ENCODE measurements at regions of chr18 and their contacts with region 1.

Region 1: DNA sequence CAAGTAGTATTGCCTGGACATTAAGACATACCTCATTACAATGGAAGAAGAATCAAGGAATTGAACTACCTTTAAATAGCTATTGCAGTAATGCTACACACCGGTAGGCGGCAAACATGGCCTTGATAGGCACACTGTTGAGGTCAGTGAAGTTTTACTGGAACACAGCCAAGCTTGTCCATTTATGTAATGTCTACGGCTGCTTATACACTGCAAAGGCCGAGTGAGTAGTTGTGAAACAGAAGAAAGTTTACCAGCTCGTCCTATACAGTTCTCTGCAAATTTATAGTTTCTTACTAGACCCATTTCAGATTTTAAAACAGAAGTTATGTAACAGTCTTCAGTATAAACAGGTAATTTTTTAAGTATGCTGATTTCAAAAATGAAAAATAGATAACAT is 38.8 kb downstream of the PPP4R1 start:
- DNase-seq: peak; percentile 94
- H3K4me3 ChIP-seq: no peak overlapping the region
- H3K27ac ChIP-seq: no peak overlapping the region
- H3K4me1 ChIP-seq: peaks cover 28% of the 10 kb centered on the region
- H3K27me3 ChIP-seq: no peaks in the 10 kb centered on the region
- CTCF ChIP-seq: peak; percentile 80 to 84
- POLR2A ChIP-seq: no peak

Region 2: GRCh38 chr18:9173770-9174233 is 401.8 kb before region 1 on chr18:
- CTCF ChIA-PET with region 1: no interaction called
- POLR2A ChIA-PET with region 1: no interaction called
- dilution Hi-C with region 1: no loop called
- intact Hi-C with region 1: no loop called
- DNase-seq: no peak
- H3K4me3 ChIP-seq: no peak overlapping the region
- H3K27ac ChIP-seq: no peak overlapping the region
- H3K4me1 ChIP-seq: peaks cover 5% of the 10 kb centered on the region
- H3K27me3 ChIP-seq: no peaks in the 10 kb centered on the region
- CTCF ChIP-seq: no peak
- POLR2A ChIP-seq: no peak

Region 3: GRCh38 chr18:9337873-9338272 is 237.7 kb before region 1 on chr18:
- CTCF ChIA-PET with region 1: no interaction called
- POLR2A ChIA-PET with region 1: no interaction called
- dilution Hi-C with region 1: no loop called
- intact Hi-C with region 1: no loop called
- DNase-seq: peak; percentile 31
- H3K4me3 ChIP-seq: no peak overlapping the region
- H3K27ac ChIP-seq: no peak overlapping the region
- H3K4me1 ChIP-seq: peaks cover 3% of the 10 kb centered on the region
- H3K27me3 ChIP-seq: no peaks in the 10 kb centered on the region
- CTCF ChIP-seq: no peak
- POLR2A ChIP-seq: no peak

Region 4: DNA sequence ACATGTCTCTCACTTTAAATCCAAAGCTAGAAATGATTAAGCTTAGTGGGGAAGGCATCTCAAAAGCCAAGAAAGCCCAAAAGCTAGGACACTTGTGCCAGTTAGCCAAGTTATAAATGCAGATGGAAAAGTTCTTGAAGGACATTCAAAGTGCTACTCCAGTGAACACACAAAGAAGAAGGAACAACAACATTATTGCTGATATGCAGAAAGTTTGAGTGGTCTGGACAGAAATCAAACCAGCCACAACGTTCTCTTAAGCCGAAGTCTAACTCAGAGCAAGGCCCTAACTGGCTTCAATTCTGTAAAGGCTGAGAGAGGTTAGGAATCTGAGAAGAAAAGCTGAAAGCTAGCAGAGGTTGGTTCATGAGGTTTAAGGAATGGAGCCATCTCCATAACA is 10.2 kb before region 1 on chr18:
- CTCF ChIA-PET with region 1: interaction called, 13 read pairs
- POLR2A ChIA-PET with region 1: interaction called, 4 read pairs
- dilution Hi-C with region 1: no loop called
- intact Hi-C with region 1: no loop called
- DNase-seq: no peak
- H3K4me3 ChIP-seq: no peak overlapping the region
- H3K27ac ChIP-seq: no peak overlapping the region
- H3K4me1 ChIP-seq: no peaks in the 10 kb centered on the region
- H3K27me3 ChIP-seq: no peaks in the 10 kb centered on the region
- CTCF ChIP-seq: no peak
- POLR2A ChIP-seq: no peak

Region 5: GRCh38 chr18:9661564-9661963 is 86.0 kb after region 1 on chr18:
- CTCF ChIA-PET with region 1: interaction called, 30 read pairs
- POLR2A ChIA-PET with region 1: no interaction called
- dilution Hi-C with region 1: no loop called
- intact Hi-C with region 1: loop called (anchors 1 kb)
- DNase-seq: no peak
- H3K4me3 ChIP-seq: no peak overlapping the region
- H3K27ac ChIP-seq: no peak overlapping the region
- H3K4me1 ChIP-seq: no peaks in the 10 kb centered on the region
- H3K27me3 ChIP-seq: no peaks in the 10 kb centered on the region
- CTCF ChIP-seq: peak in 1 of 2 donors; percentile 9
- POLR2A ChIP-seq: no peak

Region 6: GRCh38 chr18:9683407-9684396 is 108.1 kb after region 1 on chr18:
- CTCF ChIA-PET with region 1: interaction called, 24 read pairs
- POLR2A ChIA-PET with region 1: no interaction called
- dilution Hi-C with region 1: no loop called
- intact Hi-C with region 1: no loop called
- DNase-seq: peak; percentile 68
- H3K4me3 ChIP-seq: no peak overlapping the region
- H3K27ac ChIP-seq: no peak overlapping the region
- H3K4me1 ChIP-seq: no peaks in the 10 kb centered on the region
- H3K27me3 ChIP-seq: no peaks in the 10 kb centered on the region
- CTCF ChIP-seq: peak; percentile 30 to 44
- POLR2A ChIP-seq: no peak

Region 7: GRCh38 chr18:9913526-9914333 is 338.2 kb after region 1 on chr18 and contains the start of gene VAPA:
- CTCF ChIA-PET with region 1: interaction called, 5 read pairs
- POLR2A ChIA-PET with region 1: no interaction called
- dilution Hi-C with region 1: no loop called
- intact Hi-C with region 1: loop called (anchors 2 kb)
- DNase-seq: peak; percentile 99
- H3K4me3 ChIP-seq: peak within 1 kb of the TSS; percentile 78 to 99 (median 89)
- H3K27ac ChIP-seq: peak within 1 kb of the TSS; percentile 94
- H3K4me1 ChIP-seq: peaks cover 38% of the 10 kb centered on the region
- H3K27me3 ChIP-seq: peaks cover 0 to 1% of the 10 kb centered on the region in 2 experiments
- CTCF ChIP-seq: no peak
- POLR2A ChIP-seq: peak; percentile 77
- total RNA-seq, gene VAPA: 163 TPM in 2 replicates

Region 8: DNA sequence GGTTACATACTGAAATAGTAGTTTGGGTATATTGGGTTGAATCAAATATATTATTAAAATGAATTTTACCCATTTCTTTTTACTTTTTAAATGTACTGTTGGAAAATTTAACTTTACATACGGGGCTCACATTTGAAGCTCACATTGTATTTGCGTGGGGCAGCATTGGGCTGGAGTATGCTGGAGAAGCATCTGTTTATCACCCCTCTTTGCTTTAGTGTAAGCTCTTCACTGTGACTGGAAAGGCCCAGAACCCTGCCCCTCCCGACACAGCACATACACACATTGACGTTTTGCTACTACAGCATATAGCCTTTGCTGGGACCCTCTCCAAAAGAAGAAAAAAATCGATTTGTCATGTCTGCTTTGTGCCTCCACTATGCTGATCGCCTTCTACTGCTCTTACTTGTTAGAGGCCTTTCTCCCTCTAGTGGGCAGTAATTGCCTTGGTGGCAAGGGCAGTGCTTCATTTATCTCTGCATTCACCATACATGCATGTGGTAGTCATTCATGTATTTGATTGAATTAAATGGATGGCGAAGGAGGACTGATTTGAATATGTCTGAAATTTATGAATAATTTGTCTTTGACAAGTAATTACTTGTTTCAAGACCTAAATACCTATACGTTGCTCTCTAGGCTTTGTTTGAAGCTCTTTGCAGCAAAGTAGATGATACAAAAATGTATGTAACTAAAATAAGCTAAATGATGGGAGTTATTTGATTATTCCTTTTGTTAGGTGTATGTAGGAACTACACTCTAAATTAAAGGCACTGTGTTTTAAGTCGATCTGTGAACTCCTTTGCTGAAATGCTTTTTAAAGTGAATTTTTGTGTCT is 375.7 kb after region 1 on chr18:
- CTCF ChIA-PET with region 1: interaction called, 27 read pairs
- POLR2A ChIA-PET with region 1: interaction called, 3 read pairs
- dilution Hi-C with region 1: no loop called
- intact Hi-C with region 1: loop called (anchors 1 kb)
- DNase-seq: peak; percentile 75
- H3K4me3 ChIP-seq: no peak overlapping the region
- H3K27ac ChIP-seq: no peak overlapping the region
- H3K4me1 ChIP-seq: no peaks in the 10 kb centered on the region
- H3K27me3 ChIP-seq: no peaks in the 10 kb centered on the region
- CTCF ChIP-seq: peak; percentile 63 to 68
- POLR2A ChIP-seq: no peak

Region 9: GRCh38 chr18:10661317-10661716 is 1085.8 kb after region 1 on chr18:
- CTCF ChIA-PET with region 1: no interaction called
- POLR2A ChIA-PET with region 1: no interaction called
- dilution Hi-C with region 1: no loop called
- intact Hi-C with region 1: no loop called
- DNase-seq: no peak
- H3K4me3 ChIP-seq: no peak overlapping the region
- H3K27ac ChIP-seq: no peak overlapping the region
- H3K4me1 ChIP-seq: no peaks in the 10 kb centered on the region
- H3K27me3 ChIP-seq: no peaks in the 10 kb centered on the region
- CTCF ChIP-seq: no peak
- POLR2A ChIP-seq: no peak